ENCODE measurements at regions of chr12 and their contacts with region 1.

Region 1: GRCh38 chr12:27243804-27244683 is at the start of gene STK38L:
- DNase-seq: peak; percentile 96
- H3K4me3 Mint-ChIP-seq: peak within 1 kb of the TSS; percentile 100
- H3K27ac Mint-ChIP-seq: peak within 1 kb of the TSS; percentile 99
- H3K4me1 Mint-ChIP-seq: peaks cover 60% of the 10 kb centered on the region
- H3K27me3 Mint-ChIP-seq: no peaks in the 10 kb centered on the region
- total RNA-seq, gene STK38L: 20.5 and 23.3 TPM in 2 replicates

Region 2: GRCh38 chr12:26937875-26938700 is 306.0 kb before region 1 on chr12 and contains the starts of genes FGFR1OP2 and INTS13:
- intact Hi-C with region 1: loop called (anchors 1 kb)
- DNase-seq: peak; percentile 97
- H3K4me3 Mint-ChIP-seq: peak within 1 kb of the TSS; percentile 96
- H3K27ac Mint-ChIP-seq: peak within 1 kb of the TSS; percentile 96
- H3K4me1 Mint-ChIP-seq: peaks cover 82% of the 10 kb centered on the region
- H3K27me3 Mint-ChIP-seq: no peaks in the 10 kb centered on the region
- total RNA-seq, gene FGFR1OP2: 48.3 and 49.9 TPM in 2 replicates
- total RNA-seq, gene INTS13: 43.8 and 52.2 TPM in 2 replicates

Region 3: GRCh38 chr12:27142101-27142721 is 101.8 kb before region 1 on chr12:
- intact Hi-C with region 1: loop called (anchors 2 kb)
- DNase-seq: peak; percentile 16
- H3K4me3 Mint-ChIP-seq: no peak overlapping the region
- H3K27ac Mint-ChIP-seq: no peak overlapping the region
- H3K4me1 Mint-ChIP-seq: peaks cover 31% of the 10 kb centered on the region
- H3K27me3 Mint-ChIP-seq: no peaks in the 10 kb centered on the region

Region 4: GRCh38 chr12:27277846-27278260 is 33.8 kb after region 1 on chr12:
- intact Hi-C with region 1: loop called (anchors 1 kb)
- DNase-seq: peak; percentile 13
- H3K4me3 Mint-ChIP-seq: no peak overlapping the region
- H3K27ac Mint-ChIP-seq: peak overlapping the region; percentile 13
- H3K4me1 Mint-ChIP-seq: peaks cover 23% of the 10 kb centered on the region
- H3K27me3 Mint-ChIP-seq: no peaks in the 10 kb centered on the region

Region 5: DNA sequence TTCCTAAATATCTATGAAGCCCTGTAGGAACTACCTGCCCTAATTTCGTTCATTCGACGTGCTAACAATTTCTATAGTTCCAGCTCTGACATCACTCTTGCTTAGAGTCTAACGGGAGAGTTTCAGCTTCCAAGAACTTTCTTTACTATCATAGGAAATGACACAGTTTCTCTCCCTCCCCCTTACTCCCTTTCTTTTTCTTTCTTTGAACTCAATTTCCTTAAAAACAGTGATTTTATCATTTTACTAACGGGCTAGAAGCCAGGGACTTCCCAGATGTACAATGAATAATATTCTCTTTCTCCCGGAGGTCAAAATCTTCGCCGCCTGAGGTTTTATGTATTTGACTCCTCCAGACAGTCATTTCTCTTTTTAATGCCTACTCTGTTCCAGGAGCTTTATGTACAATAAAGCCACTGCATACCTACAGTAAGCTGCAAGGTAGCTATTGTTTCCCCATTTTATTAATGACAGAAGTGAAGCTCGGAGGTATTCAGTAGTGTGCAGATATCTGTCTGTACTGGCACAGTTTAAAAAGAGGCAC is 218.2 kb after region 1 on chr12:
- intact Hi-C with region 1: loop called (anchors 5 kb)
- DNase-seq: no peak
- H3K4me3 Mint-ChIP-seq: peak overlapping the region; percentile 53
- H3K27ac Mint-ChIP-seq: peak overlapping the region; percentile 84
- H3K4me1 Mint-ChIP-seq: peaks cover 69% of the 10 kb centered on the region
- H3K27me3 Mint-ChIP-seq: no peaks in the 10 kb centered on the region

Measured in activated T-helper 1 cell treated with anti-CD3 and anti-CD28 coated beads, Interleukin-12 subunit alpha, Interleukin-12 subunit beta, Interleukin-2, Interleukin-4 antibody, amounts not matched to agents 30 ng/mL and 10 ng/mL and 1 ng/mL, durations not matched to agents 14 hours and 24 hours and 36 hours (primary cell).